Activated CD4-positive, alpha-beta T cell treated with anti-CD3 and anti-CD28 coated beads for 36 hours (primary cell): ENCODE measurements at regions of chr1 and their contacts with region 1.

Region 1: DNA sequence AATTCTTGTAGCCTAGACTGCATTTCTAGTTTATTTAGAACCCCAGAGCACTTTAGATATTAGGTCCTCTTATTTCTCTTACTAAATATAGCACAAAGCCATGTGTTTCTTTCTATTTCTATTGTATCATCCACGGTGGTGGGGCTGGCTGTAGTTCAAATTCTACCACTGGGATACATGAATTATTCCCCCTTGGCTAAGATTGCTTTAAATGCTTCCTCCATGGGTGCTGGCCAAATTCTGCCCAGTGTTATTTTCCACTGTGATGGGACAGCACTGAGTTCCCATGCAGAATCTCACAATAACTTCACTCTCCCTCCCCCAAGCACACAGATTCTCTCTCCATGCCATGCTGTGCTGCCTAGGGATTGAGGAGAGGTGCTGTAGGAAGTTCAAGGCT is 41.5 kb upstream of the GBP6 start:
- DNase-seq: no peak
- ATAC-seq: no peak
- H3K4me3 Mint-ChIP-seq: no peak overlapping the region
- H3K27ac Mint-ChIP-seq: no peak overlapping the region
- H3K4me1 Mint-ChIP-seq: no peaks in the 10 kb centered on the region
- H3K27me3 Mint-ChIP-seq: no peaks in the 10 kb centered on the region

Region 2: DNA sequence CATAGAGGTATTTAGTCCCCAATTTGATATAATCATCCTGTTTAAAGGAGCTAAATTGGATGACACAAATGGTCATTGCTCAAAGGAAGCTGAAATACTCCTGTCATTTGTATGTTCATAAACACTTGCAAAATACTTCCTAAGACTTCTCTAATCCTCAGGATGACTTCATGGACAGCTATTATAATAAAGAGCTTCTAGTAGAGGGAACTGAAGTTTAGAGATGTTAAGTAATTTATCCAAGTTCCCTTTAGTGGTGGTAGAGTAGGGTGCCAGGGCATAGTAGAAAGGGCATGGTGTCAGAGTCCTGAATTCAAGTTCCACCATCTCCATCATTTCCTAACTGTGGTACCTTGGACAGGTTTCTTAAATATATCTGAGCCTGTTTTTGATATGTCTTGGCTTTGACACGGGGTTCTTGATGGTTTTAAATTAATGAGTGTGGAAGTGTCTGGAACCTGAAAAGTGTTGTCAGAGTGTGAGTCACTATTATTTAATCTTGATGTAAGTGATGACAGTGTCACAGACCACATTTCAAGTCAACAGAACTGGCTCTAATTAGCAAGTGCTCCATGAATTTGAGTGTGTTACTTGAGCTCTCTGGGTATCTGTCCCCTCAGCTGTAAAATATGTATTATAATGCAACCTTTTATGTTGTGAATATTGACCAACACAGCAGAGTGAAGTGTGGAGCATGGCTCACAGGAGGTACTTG is 29.4 kb after region 1 on chr1:
- CTCF ChIA-PET with region 1: no interaction called
- POLR2A ChIA-PET with region 1: no interaction called
- intact Hi-C with region 1: loop called in 1 of 2 experiments (anchors 2 kb)
- DNase-seq: no peak
- ATAC-seq: peak; percentile 57
- H3K4me3 Mint-ChIP-seq: no peak overlapping the region
- H3K27ac Mint-ChIP-seq: no peak overlapping the region
- H3K4me1 Mint-ChIP-seq: peaks cover 25% of the 10 kb centered on the region
- H3K27me3 Mint-ChIP-seq: no peaks in the 10 kb centered on the region

Region 3: GRCh38 chr1:89576013-89576412 is 253.6 kb after region 1 on chr1:
- CTCF ChIA-PET with region 1: no interaction called
- POLR2A ChIA-PET with region 1: no interaction called
- intact Hi-C with region 1: no loop called
- DNase-seq: no peak
- ATAC-seq: no peak
- H3K4me3 Mint-ChIP-seq: no peak overlapping the region
- H3K27ac Mint-ChIP-seq: no peak overlapping the region
- H3K4me1 Mint-ChIP-seq: peaks cover 44% of the 10 kb centered on the region
- H3K27me3 Mint-ChIP-seq: no peaks in the 10 kb centered on the region